ENCODE measurements at regions of chr10 and their contacts with region 1.

Region 1: GRCh38 chr10:123154092-123154921 is at the start of gene BUB3:
- DNase-seq: peak; percentile 97
- ATAC-seq: peak; percentile 88
- H3K4me3 Mint-ChIP-seq: peak within 1 kb of the TSS; percentile 99
- H3K27ac Mint-ChIP-seq: peak within 1 kb of the TSS; percentile 99
- H3K4me1 Mint-ChIP-seq: peaks cover 75% of the 10 kb centered on the region
- H3K27me3 Mint-ChIP-seq: peaks cover 31% of the 10 kb centered on the region
- CTCF ChIP-seq: no peak
- total RNA-seq, gene BUB3: 180 to 192 TPM (median 186 TPM) in 3 replicates

Region 2: DNA sequence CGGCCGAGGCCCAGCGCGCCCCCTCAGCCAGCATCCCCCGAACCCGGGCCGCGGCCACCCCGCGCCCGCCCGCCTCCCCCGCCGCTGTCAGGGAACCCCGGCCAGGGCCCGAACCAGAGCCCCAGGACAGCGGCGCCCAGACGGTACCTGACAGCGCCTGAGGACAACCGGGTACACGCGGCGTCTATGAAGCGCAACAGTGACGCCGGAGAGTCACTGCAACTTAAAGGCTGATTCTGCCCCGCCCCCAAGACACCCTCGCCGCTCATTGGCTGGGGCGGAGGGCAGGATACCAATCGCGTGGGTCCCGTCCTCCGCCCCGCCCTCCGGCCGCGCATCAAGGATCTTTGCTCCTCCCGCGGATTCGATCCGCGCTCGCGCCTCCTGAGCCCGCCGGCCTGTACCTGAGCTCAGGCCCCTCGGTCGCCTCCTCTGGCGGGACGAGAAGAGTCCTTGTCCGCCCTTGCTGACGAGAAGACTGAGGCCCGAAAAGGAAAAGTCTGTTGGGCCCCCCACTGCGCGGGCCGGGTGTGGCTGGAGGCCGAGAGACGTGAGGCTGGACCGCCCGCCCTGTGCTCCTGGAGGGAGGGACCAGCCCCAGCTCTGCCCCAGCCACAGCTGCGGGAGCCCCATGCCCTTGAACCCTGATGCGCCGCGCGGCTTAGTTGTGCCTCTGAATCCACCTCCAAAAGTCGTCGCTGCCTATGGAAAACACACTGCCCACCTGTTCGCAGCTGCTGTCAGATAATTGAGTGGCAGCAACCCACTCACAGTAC is 1264.6 kb after region 1 on chr10 and contains the start of gene OAT:
- CTCF ChIA-PET with region 1: no interaction called
- POLR2A ChIA-PET with region 1: interaction called, 10 read pairs
- DNase-seq: peak; percentile 99
- ATAC-seq: peak; percentile 97
- H3K4me3 Mint-ChIP-seq: peak within 1 kb of the TSS; percentile 81
- H3K27ac Mint-ChIP-seq: peak within 1 kb of the TSS; percentile 95
- H3K4me1 Mint-ChIP-seq: peaks cover 51% of the 10 kb centered on the region
- H3K27me3 Mint-ChIP-seq: peaks cover 18% of the 10 kb centered on the region
- CTCF ChIP-seq: no peak
- total RNA-seq, gene OAT: 96.1 to 117 TPM (median 97.4 TPM) in 3 replicates